ENCODE measurements at regions of chr2 and their contacts with region 1.

Region 1: GRCh38 chr2:30305235-30305634 is 73.9 kb downstream of the LBH start:
- DNase-seq: peak; percentile 52
- H3K4me3 ChIP-seq: no peak overlapping the region
- H3K27ac ChIP-seq: no peak overlapping the region
- H3K4me1 ChIP-seq: no peaks in the 10 kb centered on the region
- H3K27me3 ChIP-seq: no peaks in the 10 kb centered on the region
- CTCF ChIP-seq: no peak

Region 2: GRCh38 chr2:30398084-30398873 is 93.0 kb after region 1 on chr2:
- CTCF ChIA-PET with region 1: no interaction called
- dilution Hi-C with region 1: loop called (anchors 5 kb)
- in situ Hi-C with region 1: no loop called
- intact Hi-C with region 1: no loop called
- DNase-seq: peak; percentile 60
- H3K4me3 ChIP-seq: no peak overlapping the region
- H3K27ac ChIP-seq: no peak overlapping the region
- H3K4me1 ChIP-seq: no peaks in the 10 kb centered on the region
- H3K27me3 ChIP-seq: peaks cover 2% of the 10 kb centered on the region
- CTCF ChIP-seq: no peak